Breast epithelium (tissue), 4 donors: ENCODE measurements at regions of chr18 and their contacts with region 1.

Region 1: DNA sequence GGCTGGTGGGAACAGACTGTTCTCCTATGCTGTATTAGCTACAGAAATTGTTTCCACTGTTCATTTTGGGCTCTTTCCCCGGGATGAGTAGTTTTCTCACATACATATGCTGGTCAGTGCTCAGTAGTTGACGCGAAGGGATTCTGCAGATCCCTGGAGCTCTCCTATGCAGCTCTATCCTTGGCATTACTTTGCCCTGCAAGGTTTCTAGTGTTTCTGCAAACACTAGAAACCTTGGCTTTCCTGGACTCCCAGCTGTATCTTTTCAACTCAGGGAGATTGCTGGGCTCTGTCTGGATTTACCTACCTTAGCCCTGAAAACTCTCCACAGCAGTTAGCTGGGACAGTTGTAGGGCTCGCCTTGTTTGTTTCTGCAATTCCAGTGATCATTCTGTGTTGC is 10.9 kb downstream of the KIAA1328 start:
- DNase-seq: no peak
- H3K4me3 ChIP-seq: no peak overlapping the region
- H3K27ac ChIP-seq: no peak overlapping the region
- H3K4me1 ChIP-seq: no peaks in the 10 kb centered on the region
- H3K27me3 ChIP-seq: no peaks in the 10 kb centered on the region
- CTCF ChIP-seq: no peak
- POLR2A ChIP-seq: no peak

Region 2: DNA sequence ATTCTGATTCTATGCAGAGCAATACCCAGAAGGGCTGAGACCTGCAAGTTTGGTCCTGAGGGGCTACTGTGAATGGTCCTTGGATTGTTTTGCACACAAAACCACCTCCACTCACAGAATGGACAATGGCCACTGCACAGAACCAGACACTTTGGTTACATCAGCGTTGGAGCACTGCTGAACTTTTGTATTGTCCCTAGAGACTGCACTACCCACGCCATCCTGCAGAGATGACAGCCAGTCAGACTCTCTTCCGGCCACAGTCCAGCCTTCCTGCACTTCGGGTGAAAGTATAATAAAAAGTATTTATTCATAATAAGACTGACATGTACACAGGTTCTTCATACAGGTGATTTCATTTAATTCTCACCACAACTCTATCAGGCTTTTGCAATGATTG is 690.0 kb after region 1 on chr18:
- intact Hi-C with region 1: loop called (anchors 5 kb)
- DNase-seq: no peak
- H3K4me3 ChIP-seq: no peak overlapping the region
- H3K27ac ChIP-seq: no peak overlapping the region
- H3K4me1 ChIP-seq: no peaks in the 10 kb centered on the region
- H3K27me3 ChIP-seq: peaks cover 0 to 12% of the 10 kb centered on the region in 2 donors
- CTCF ChIP-seq: no peak
- POLR2A ChIP-seq: no peak